Activated CD4-positive, alpha-beta T cell treated with anti-CD3 and anti-CD28 coated beads for 36 hours (primary cell): ENCODE measurements at regions of chr19 and their contacts with region 1.

Region 1: GRCh38 chr19:39435499-39436349 is at the start of gene RPS16:
- DNase-seq: peak; percentile 100
- ATAC-seq: peak; percentile 84
- H3K4me3 Mint-ChIP-seq: peak within 1 kb of the TSS; percentile 99
- H3K27ac Mint-ChIP-seq: peak within 1 kb of the TSS; percentile 100
- H3K4me1 Mint-ChIP-seq: peaks cover 45% of the 10 kb centered on the region
- H3K27me3 Mint-ChIP-seq: no peaks in the 10 kb centered on the region
- total RNA-seq, gene RPS16: 3,146 to 3,331 TPM

Region 2: DNA sequence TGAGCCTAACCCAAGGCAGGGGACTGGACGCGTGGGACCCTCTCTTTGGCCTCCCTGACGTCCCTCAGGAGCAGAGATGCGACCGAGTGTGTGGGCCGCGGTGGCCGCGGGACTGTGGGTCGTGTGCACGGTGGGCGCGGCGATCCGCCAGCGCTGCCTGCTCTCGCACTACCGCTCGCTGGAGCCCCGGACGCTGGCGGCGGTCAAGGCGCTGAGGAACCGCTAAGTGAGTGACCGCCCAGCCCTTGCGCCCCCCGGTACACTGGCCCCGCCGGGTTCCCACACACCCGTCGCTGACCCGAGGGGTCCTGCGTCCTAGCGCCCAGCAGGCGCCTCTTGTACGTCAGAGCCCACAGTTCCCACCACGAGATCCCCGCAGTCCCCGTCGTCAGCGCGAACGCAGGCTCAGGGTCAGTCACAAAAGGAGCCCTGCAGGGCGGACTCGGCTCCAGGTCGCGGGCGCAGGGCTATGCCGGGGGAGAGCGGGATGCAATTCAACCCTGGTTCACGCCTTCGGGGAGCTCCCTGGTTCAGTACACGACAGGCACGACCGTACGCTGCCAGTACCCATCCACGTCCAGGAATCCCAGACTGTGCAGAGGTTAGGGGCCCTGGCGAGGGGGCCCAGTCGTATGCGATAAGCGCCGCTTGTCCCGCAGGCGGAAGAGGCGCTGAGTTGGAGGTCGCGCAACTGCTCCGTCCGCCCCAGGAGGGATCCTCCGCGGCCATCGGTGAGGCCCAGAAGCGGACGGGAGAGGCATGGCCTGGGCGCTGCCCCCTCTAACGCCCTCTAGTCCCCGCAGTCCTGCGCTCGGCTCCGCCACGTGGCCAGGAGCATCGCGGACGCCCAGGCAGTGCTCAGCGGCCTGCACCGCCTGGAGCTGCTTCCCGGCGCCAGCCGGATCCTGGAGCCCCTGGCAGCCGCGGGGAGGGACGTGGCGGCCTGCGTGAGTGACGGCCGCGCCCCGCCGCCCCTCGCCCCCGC is 171.1 kb before region 1 on chr19:
- CTCF ChIA-PET with region 1: no interaction called
- POLR2A ChIA-PET with region 1: no interaction called
- intact Hi-C with region 1: no loop called
- DNase-seq: peak; percentile 8
- ATAC-seq: peak; percentile 42
- H3K4me3 Mint-ChIP-seq: no peak overlapping the region
- H3K27ac Mint-ChIP-seq: no peak overlapping the region
- H3K4me1 Mint-ChIP-seq: peaks cover 2% of the 10 kb centered on the region
- H3K27me3 Mint-ChIP-seq: peaks cover 36% of the 10 kb centered on the region

Region 3: GRCh38 chr19:39351537-39352064 is 84.1 kb before region 1 on chr19:
- CTCF ChIA-PET with region 1: no interaction called
- POLR2A ChIA-PET with region 1: no interaction called
- intact Hi-C with region 1: loop called in 1 of 2 experiments (anchors 1 kb)
- DNase-seq: peak; percentile 77
- ATAC-seq: peak; percentile 94
- H3K4me3 Mint-ChIP-seq: no peak overlapping the region
- H3K27ac Mint-ChIP-seq: peak overlapping the region; percentile 89
- H3K4me1 Mint-ChIP-seq: peaks cover 44% of the 10 kb centered on the region
- H3K27me3 Mint-ChIP-seq: no peaks in the 10 kb centered on the region

Region 4: DNA sequence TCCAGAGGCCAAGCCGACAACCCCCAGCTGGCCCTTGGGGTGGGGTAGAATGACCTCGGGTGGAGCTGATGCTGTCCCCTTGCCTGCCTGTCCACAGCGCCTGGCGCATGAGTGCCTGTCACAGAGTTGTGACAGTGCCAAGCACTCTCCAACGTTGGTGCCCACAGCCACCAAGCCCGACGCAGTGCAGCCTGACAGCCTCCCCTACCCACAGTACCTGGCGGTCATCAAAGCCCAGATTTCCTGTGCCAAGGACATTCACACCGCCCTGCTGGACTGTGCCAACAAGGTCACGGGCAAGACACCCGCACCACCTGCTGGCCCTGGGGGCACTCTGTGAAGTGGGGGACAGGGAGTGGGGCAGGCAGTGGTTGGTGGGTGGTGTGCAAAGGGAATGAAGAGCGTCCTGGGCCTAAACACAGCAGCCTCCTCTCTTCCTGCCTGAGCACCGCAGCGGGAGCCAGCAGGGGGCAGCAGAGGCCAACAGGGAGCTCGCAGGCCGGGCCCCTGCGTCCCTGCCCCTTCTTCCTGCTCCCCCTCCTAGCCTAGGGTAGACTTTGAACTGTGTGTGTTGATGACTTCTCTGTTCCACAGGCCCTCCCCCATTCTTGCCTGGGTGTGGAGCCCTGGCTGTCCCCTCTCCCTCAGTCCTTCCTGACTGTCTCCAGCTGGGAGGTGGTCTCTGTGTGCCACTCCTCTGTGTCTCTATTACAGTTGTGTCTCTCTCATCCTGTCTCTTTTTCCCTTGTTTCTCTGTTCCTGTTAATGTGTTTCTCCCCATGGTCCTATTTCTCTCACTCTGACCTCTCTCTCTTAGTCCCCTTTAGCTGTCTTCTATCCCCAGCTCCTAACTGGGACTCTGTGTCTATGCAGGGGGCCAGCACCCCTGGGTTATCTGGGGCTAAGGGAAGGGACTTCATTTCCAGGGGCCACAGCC is 38.1 kb before region 1 on chr19:
- CTCF ChIA-PET with region 1: interaction called, 13 read pairs
- POLR2A ChIA-PET with region 1: interaction called, 21 read pairs
- intact Hi-C with region 1: loop called (anchors 2 to 5 kb)
- DNase-seq: peak; percentile 97
- ATAC-seq: peak; percentile 58
- H3K4me3 Mint-ChIP-seq: peak overlapping the region; percentile 52
- H3K27ac Mint-ChIP-seq: peak overlapping the region; percentile 97
- H3K4me1 Mint-ChIP-seq: peaks cover 59% of the 10 kb centered on the region
- H3K27me3 Mint-ChIP-seq: no peaks in the 10 kb centered on the region

Region 5: GRCh38 chr19:39480337-39481228 is 44.9 kb after region 1 on chr19 and contains the start of gene TIMM50:
- CTCF ChIA-PET with region 1: interaction called, 4 read pairs
- POLR2A ChIA-PET with region 1: interaction called, 10 read pairs
- intact Hi-C with region 1: loop called in 1 of 2 experiments (anchors 1 kb)
- DNase-seq: peak; percentile 100
- ATAC-seq: peak; percentile 94
- H3K4me3 Mint-ChIP-seq: peak within 1 kb of the TSS; percentile 95
- H3K27ac Mint-ChIP-seq: peak within 1 kb of the TSS; percentile 92
- H3K4me1 Mint-ChIP-seq: peaks cover 24% of the 10 kb centered on the region
- H3K27me3 Mint-ChIP-seq: no peaks in the 10 kb centered on the region
- total RNA-seq, gene TIMM50: 99.4 to 126 TPM

Region 6: DNA sequence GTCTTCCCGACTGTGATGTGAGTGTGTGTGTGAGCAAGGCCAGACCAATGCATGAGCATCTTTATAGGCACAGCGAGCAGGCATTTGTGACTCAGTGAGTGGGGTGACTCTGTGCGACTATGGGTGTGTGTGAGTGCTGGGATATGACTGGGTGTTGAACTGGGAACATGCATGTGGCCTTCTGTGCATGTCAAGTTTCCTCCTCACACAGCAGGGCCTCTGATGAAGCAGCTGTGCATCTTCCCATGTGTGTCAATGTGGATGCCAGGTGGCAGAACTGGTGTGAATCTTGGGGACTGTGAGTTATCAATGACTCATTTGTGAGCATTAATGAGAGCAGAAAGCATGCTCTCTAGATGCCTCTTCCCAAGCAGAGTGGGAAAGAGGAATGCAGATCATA is 256.4 kb after region 1 on chr19:
- CTCF ChIA-PET with region 1: no interaction called
- POLR2A ChIA-PET with region 1: interaction called, 13 read pairs
- intact Hi-C with region 1: no loop called
- DNase-seq: peak; percentile 39
- ATAC-seq: peak; percentile 70
- H3K4me3 Mint-ChIP-seq: no peak overlapping the region
- H3K27ac Mint-ChIP-seq: no peak overlapping the region
- H3K4me1 Mint-ChIP-seq: peaks cover 7% of the 10 kb centered on the region
- H3K27me3 Mint-ChIP-seq: peaks cover 18% of the 10 kb centered on the region